ENCODE measurements at regions of chr9 and their contacts with region 1.

Region 1: DNA sequence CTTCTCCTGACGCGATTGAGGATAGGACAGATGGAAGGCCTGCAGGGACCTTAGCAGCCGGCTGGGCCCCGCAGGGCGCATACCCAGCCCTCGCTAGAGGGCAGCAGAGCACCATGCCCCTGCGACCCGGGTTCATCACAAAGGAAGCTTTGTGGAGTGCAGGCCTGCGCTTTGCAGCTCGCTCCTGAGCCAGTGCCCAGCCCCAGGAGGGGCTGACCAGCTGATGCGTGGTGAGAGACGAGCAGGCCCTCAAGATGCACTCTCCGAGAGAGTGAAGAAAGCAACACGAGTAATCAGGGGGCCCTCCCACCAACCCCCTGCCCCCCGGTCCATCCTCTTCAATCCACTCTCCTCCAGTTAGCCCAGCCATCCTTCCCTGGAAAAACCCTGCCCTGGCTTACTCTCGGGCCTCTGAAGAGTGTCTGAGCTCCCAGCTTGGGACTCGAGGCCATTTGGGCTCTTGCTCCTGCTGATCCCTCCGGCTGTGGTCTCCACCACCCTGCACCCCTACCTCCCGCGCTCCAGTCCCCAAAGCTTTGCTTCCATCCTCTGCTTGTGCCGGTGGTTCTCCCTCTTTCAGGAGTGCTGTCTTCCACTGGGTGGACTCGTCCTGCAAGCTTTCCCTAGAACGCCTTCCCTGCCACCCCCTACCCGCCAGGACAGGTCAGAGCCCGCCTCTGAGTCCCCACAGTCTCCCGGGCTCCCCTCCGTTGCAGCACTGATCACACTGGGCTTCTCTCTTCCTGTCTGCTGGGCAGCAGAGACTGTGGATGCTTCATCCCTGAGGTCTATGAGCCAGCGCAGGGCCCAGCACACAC is 9.1 kb upstream of the KIF12 start:
- DNase-seq: peak; percentile 57 to 81
- H3K4me3 ChIP-seq: no peak overlapping the region
- H3K27ac ChIP-seq: no peak overlapping the region
- H3K4me1 ChIP-seq: peaks cover 0 to 12% (median 10%) of the 10 kb centered on the region in 4 donors
- H3K27me3 ChIP-seq: no peaks in the 10 kb centered on the region
- CTCF ChIP-seq: peak; percentile 92 to 99

Region 2: DNA sequence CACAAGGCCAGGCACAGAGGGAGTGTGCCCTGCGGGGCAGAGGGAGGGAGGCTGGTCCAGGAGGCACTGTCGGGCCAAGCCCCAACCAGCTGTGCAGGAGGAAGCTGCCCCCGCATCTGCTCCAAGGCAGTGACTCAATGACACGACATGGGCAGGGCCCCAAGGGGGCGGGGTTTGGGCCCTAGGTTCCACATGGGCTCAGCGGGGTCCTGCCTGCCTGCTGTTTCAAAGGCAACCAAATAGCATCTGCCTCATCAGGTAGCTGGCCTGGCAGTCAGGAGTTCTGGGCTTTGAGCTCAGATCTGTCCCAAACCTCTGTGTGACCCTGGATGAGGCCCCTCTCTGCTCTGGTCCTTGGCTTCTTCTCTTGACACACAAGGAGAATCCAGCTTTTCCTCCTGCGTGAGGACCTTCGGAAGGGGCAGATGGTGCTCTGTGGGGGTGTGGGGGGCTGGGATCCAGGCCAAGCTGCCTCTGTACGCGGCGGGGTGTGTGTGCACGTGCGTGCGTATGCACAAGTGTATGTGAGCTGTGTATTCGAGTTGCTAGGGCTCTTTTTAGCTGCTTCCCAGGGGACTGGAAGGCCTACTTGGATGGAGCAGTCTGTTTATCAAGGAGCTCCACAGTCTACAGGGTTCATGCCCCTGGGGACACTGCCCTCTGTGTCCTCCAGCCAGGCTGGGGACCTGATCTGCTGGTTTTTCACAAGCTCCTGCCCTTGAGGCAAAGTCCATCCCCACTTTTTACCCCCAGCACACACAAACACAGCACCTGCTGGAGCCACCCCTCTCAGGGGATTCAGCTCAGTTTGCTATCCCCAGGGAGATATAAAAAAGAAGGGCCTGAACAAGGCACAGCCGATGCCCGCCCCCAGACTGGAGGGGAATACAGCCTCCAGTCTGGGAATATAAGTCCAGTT is 505.8 kb before region 1 on chr9:
- intact Hi-C with region 1: no loop called
- DNase-seq: peak; percentile 84 to 95
- H3K4me3 ChIP-seq: no peak overlapping the region
- H3K27ac ChIP-seq: peak overlapping the region; percentile 74 to 81
- H3K4me1 ChIP-seq: peaks cover 0 to 62% (median 59%) of the 10 kb centered on the region in 4 donors
- H3K27me3 ChIP-seq: no peaks in the 10 kb centered on the region
- CTCF ChIP-seq: no peak

Region 3: GRCh38 chr9:114082017-114082762 is 26.0 kb before region 1 on chr9:
- intact Hi-C with region 1: no loop called
- DNase-seq: peak; percentile 90 to 92
- H3K4me3 ChIP-seq: no peak overlapping the region
- H3K27ac ChIP-seq: no peak overlapping the region
- H3K4me1 ChIP-seq: peaks cover 0 to 13% (median 2%) of the 10 kb centered on the region in 4 donors
- H3K27me3 ChIP-seq: no peaks in the 10 kb centered on the region
- CTCF ChIP-seq: peak; percentile 90 to 93

Region 4: DNA sequence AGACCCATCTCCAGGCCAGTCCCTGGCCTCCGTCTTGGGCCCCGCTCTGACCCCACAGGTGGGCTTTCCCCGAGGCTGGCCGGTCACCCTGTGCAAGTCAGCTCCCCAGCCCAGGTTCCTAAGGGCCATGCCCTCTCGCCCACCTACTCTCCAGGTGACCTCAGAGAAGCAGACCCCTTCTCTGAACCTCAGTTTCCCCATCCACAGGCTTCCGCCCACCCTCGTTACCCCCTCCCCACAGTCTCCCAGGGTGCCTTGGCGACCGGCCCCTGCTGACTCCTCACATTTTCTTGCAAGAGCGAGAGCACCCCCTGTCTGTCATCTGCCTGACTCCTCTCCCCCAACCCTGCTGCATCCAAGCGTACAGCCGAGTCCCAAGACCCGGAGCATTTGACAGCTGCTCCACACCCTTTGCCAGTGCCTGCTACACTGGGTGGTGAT is 163.4 kb after region 1 on chr9:
- intact Hi-C with region 1: loop called (anchors 5 kb)
- DNase-seq: peak in 1 of 2 donors; percentile 41
- H3K4me3 ChIP-seq: no peak overlapping the region
- H3K27ac ChIP-seq: no peak overlapping the region
- H3K4me1 ChIP-seq: no peaks in the 10 kb centered on the region
- H3K27me3 ChIP-seq: no peaks in the 10 kb centered on the region
- CTCF ChIP-seq: peak; percentile 64 to 68

Region 5: GRCh38 chr9:114291064-114291474 is 182.8 kb after region 1 on chr9:
- intact Hi-C with region 1: loop called (anchors 5 kb)
- DNase-seq: peak; percentile 55 to 79
- H3K4me3 ChIP-seq: no peak overlapping the region
- H3K27ac ChIP-seq: no peak overlapping the region
- H3K4me1 ChIP-seq: peaks cover 0 to 12% (median 10%) of the 10 kb centered on the region in 4 donors
- H3K27me3 ChIP-seq: no peaks in the 10 kb centered on the region
- CTCF ChIP-seq: peak; percentile 93

Measured in tibial artery (tissue), 4 donors.